Vagina (tissue), 2 donors: ENCODE measurements at regions of chr5 and their contacts with region 1.

Region 1: DNA sequence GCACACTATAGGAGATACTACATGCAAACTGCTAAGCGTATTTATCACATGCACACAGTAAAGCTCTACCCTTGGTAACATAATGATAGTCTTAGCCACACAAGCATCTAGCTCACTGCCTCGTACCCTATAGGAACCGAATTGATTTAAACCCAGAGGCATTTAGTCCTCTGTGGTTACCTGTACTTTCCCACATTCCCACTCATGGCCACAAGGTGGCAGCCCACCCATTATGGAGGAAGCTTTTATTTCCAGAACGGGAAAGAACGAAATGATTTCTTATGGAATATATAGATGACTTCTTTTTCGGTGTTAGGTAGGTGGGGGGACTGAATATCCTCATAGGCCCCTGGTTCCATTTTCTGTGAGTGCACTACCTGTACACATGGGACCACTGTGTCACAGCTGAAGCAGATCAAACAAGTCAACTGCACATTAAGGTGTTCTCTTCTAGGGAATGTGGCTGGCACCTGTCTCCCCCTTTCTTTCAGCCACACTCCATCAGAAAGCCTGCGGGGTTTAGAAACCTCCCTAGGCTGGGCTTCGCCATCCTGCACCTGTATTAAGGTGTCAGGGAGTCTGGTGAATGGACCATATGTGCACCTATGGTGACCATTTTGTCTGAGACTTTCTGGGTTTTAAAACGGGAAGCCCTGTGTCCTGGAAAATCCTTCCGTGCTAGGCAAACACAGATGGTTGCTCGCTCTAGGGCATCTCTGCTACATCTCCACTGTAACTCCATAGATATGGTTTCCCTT is 313.2 kb downstream of the SLIT3 start:
- DNase-seq: no peak
- H3K4me3 ChIP-seq: no peak overlapping the region
- H3K27ac ChIP-seq: no peak overlapping the region
- H3K4me1 ChIP-seq: no peaks in the 10 kb centered on the region
- H3K27me3 ChIP-seq: no peaks in the 10 kb centered on the region
- CTCF ChIP-seq: peak; percentile 79 to 94 (median 86)
- POLR2A ChIP-seq: no peak

Region 2: DNA sequence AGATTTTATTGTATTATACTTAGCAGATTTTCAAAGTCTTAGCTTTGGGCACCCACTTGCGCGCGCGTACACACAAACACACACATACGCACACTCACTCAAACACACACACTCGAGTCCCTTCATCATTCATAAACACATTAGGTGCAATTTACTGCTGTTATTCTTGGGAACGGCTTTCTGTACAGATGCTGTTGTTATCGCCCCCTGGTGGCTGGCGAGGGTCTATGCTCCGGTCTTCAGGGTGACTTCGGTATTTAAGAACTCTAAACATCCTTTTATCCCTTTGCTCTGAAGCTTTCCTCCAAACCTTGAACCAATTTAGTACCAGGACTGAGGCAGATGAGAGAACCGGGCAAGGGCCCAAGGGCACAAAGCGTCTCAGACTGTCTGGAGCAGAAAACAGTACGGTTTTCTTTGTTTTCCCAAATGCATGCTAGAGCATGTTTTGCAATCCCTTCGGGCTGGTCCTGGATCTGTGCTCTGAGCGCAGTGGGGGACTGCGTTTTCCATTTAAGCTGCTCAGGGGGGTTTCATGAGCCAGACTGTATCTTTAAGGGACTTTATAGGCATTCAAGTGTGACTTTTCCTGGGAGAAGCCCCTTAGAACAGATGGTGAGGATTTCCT is 314.9 kb after region 1 on chr5:
- intact Hi-C with region 1: loop called (anchors 5 kb)
- DNase-seq: no peak
- H3K4me3 ChIP-seq: no peak overlapping the region
- H3K27ac ChIP-seq: no peak overlapping the region
- H3K4me1 ChIP-seq: peaks cover 31% of the 10 kb centered on the region
- H3K27me3 ChIP-seq: no peaks in the 10 kb centered on the region
- CTCF ChIP-seq: peak; percentile 64 to 88 (median 84)
- POLR2A ChIP-seq: no peak

Region 3: GRCh38 chr5:169577951-169578350 is 590.2 kb after region 1 on chr5:
- intact Hi-C with region 1: loop called (anchors 10 kb)
- DNase-seq: no peak
- H3K4me3 ChIP-seq: no peak overlapping the region
- H3K27ac ChIP-seq: no peak overlapping the region
- H3K4me1 ChIP-seq: no peaks in the 10 kb centered on the region
- H3K27me3 ChIP-seq: no peaks in the 10 kb centered on the region
- CTCF ChIP-seq: peak in 1 of 3 experiments; percentile 16
- POLR2A ChIP-seq: no peak